ENCODE measurements at regions of chr1 and their contacts with region 1.

Region 1: DNA sequence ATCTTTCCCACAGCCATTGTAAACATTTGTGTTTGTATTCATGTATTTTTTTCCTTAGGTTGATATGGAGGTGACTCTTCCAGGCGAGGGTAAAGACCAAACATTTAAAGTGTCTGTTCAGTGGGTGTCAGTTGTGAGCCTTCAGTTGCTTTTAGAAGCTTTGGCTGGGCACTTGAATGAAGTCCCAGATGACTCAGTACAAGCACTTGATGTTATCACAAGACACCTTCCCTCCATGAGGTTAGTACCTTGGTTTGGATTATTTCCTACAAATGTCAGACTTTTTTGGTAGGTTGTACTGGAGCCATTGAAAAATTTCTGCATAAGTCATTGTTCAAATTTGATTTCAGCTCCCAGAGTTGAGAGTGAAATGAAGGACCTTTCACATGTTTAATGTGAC is 17.4 kb downstream of the AGO4 start:
- DNase-seq: no peak
- H3K4me3 ChIP-seq: no peak overlapping the region
- H3K27ac ChIP-seq: no peak overlapping the region
- H3K4me1 ChIP-seq: no peaks in the 10 kb centered on the region
- H3K27me3 ChIP-seq: no peaks in the 10 kb centered on the region
- CTCF ChIP-seq: no peak

Region 2: DNA sequence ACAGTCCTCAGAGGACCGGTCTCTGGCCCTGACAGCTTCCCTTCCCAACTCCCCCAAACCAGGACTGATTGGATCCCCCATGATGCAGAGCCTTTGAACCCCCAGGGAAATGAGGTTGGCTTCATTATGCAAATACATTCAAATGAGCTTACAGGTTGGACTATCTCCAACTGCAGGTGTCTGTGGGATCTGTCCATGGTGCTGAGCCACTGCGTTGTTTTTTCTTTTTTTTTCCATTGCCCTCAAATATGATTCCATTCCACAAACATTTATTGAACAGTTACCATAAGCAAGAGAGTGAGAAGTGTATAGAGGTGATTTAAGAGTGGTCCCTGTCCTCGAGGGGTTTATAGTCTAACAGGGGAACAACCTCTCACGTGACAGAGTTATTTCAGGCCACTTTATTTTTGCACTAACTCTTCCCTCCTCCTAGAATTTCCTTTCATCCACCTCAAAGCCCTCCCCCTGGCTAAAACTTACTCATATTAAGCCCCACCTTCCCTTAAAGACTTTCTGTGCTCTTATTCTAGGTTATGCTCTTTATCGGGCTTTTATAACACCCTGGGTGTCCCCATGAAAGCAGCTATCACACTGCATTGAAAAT is 917.7 kb before region 1 on chr1:
- CTCF ChIA-PET with region 1: no interaction called
- dilution Hi-C with region 1: no loop called
- in situ Hi-C with region 1: no loop called
- intact Hi-C with region 1: no loop called
- DNase-seq: no peak
- H3K4me3 ChIP-seq: no peak overlapping the region
- H3K27ac ChIP-seq: no peak overlapping the region
- H3K4me1 ChIP-seq: no peaks in the 10 kb centered on the region
- H3K27me3 ChIP-seq: no peaks in the 10 kb centered on the region
- CTCF ChIP-seq: no peak

Region 3: GRCh38 chr1:35747938-35748702 is 77.1 kb before region 1 on chr1:
- CTCF ChIA-PET with region 1: no interaction called
- dilution Hi-C with region 1: loop called (anchors 5 kb)
- in situ Hi-C with region 1: no loop called
- intact Hi-C with region 1: no loop called
- DNase-seq: peak; percentile 57
- H3K4me3 ChIP-seq: no peak overlapping the region
- H3K27ac ChIP-seq: no peak overlapping the region
- H3K4me1 ChIP-seq: no peaks in the 10 kb centered on the region
- H3K27me3 ChIP-seq: no peaks in the 10 kb centered on the region
- CTCF ChIP-seq: no peak

Region 4: GRCh38 chr1:35769759-35770446 is 55.4 kb before region 1 on chr1 and contains the start of gene CLSPN:
- CTCF ChIA-PET with region 1: no interaction called
- dilution Hi-C with region 1: no loop called
- in situ Hi-C with region 1: no loop called
- intact Hi-C with region 1: no loop called
- DNase-seq: peak; percentile 93
- H3K4me3 ChIP-seq: peak within 1 kb of the TSS; percentile 81 to 92 (median 84)
- H3K27ac ChIP-seq: peak within 1 kb of the TSS; percentile 76
- H3K4me1 ChIP-seq: no peaks in the 10 kb centered on the region
- H3K27me3 ChIP-seq: no peaks in the 10 kb centered on the region
- CTCF ChIP-seq: no peak
- total RNA-seq, gene CLSPN: 2.3 to 29.4 TPM

Measured in mammary epithelial cell (primary cell).